GM10248 (cell line): ENCODE measurements at regions of chr1 and their contacts with region 1.

Region 1: DNA sequence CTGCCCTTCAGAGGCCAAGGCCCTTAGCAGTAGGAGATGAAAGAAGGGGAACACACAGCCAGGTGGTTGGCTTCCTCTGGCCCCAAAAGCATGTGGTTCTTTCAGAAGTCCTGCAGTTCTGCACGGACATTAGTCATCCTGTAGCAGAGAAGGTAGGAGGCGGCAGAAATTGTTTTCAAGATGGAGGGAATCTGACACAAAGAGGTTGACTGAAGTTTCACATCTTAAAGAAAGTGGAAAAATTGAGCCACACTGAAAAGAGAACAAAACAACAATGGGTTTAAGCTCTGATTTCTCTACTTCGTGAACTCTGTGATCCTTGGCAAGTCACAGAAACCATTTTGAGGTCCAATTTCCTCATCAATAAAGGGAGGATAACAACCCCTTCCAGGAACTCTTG is 125.3 kb upstream of the DNAH14 start:
- DNase-seq: no peak
- CTCF ChIP-seq: no peak

Region 2: GRCh38 chr1:224791362-224791941 is 12.8 kb before region 1 on chr1:
- CTCF ChIA-PET with region 1: no interaction called
- POLR2A ChIA-PET with region 1: no interaction called
- DNase-seq: no peak
- CTCF ChIP-seq: no peak

Region 3: GRCh38 chr1:224820341-224820740 is 16.1 kb after region 1 on chr1:
- CTCF ChIA-PET with region 1: interaction called, 13 read pairs
- POLR2A ChIA-PET with region 1: no interaction called
- DNase-seq: no peak
- CTCF ChIP-seq: no peak